ENCODE measurements at regions of chr20 and their contacts with region 1.

Region 1: GRCh38 chr20:63495741-63496595 is 2.9 kb downstream of the EEF1A2 start:
- DNase-seq: peak; percentile 83
- H3K4me3 Mint-ChIP-seq: no peak overlapping the region
- H3K27ac Mint-ChIP-seq: no peak overlapping the region
- H3K4me1 Mint-ChIP-seq: peaks cover 6% of the 10 kb centered on the region
- H3K27me3 Mint-ChIP-seq: peaks cover 77% of the 10 kb centered on the region

Region 2: GRCh38 chr20:62571667-62572344 is 924.2 kb before region 1 on chr20:
- CTCF ChIA-PET with region 1: no interaction called
- DNase-seq: peak; percentile 27
- H3K4me3 Mint-ChIP-seq: no peak overlapping the region
- H3K27ac Mint-ChIP-seq: no peak overlapping the region
- H3K4me1 Mint-ChIP-seq: peaks cover 3% of the 10 kb centered on the region
- H3K27me3 Mint-ChIP-seq: peaks cover 67% of the 10 kb centered on the region

Region 3: DNA sequence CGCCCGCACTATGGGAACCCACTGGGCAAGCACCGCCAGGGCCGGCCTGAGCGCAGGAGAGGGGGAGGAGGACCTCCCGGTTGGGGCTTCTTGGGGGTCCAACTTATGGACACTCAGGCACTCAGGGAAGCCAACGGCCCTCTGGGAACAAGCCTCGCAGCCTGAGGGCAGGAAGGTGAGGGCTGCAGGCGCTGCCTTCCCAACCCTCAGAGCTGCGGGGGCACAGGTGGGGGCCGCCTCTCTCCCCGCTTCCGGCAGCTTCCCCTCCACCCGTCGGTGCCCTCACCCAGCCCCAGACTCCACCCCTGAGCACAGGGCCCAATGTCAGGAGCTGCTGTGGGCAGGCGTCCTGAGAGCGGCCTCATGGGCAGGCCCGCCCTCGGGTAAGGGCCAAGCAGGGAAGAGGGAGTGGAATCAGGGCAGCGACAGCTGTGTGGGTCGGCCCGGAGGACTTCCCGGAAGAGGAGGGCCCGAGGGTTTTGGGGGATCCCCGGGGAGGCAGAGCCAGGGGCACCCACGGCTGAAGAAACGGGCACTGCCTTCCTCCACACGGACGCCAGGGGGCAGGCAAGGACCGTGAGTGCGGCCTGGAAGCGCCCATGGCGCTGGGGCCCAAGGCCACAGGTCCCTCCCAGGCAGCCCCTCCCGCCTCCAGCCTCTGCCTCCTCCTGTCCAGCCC is 41.7 kb after region 1 on chr20:
- CTCF ChIA-PET with region 1: interaction called, 15 read pairs
- DNase-seq: peak; percentile 96
- H3K4me3 Mint-ChIP-seq: peak overlapping the region; percentile 70
- H3K27ac Mint-ChIP-seq: peak overlapping the region; percentile 89
- H3K4me1 Mint-ChIP-seq: peaks cover 24% of the 10 kb centered on the region
- H3K27me3 Mint-ChIP-seq: peaks cover 45% of the 10 kb centered on the region